ENCODE measurements at regions of chrX and their contacts with region 1.

Region 1: GRCh38 chrX:40013266-40014195 is 84.2 kb downstream of the BCOR start:
- DNase-seq: peak; percentile 41
- H3K4me3 Mint-ChIP-seq: peak overlapping the region; percentile 73
- H3K27ac Mint-ChIP-seq: peak overlapping the region; percentile 87
- H3K4me1 Mint-ChIP-seq: peaks cover 18% of the 10 kb centered on the region
- H3K27me3 Mint-ChIP-seq: peaks cover 11% of the 10 kb centered on the region

Region 2: GRCh38 chrX:39814391-39814790 is 199.1 kb before region 1 on chrX:
- intact Hi-C with region 1: loop called (anchors 5 kb)
- DNase-seq: peak; percentile 19
- H3K4me3 Mint-ChIP-seq: no peak overlapping the region
- H3K27ac Mint-ChIP-seq: no peak overlapping the region
- H3K4me1 Mint-ChIP-seq: peaks cover 33% of the 10 kb centered on the region
- H3K27me3 Mint-ChIP-seq: no peaks in the 10 kb centered on the region

Region 3: DNA sequence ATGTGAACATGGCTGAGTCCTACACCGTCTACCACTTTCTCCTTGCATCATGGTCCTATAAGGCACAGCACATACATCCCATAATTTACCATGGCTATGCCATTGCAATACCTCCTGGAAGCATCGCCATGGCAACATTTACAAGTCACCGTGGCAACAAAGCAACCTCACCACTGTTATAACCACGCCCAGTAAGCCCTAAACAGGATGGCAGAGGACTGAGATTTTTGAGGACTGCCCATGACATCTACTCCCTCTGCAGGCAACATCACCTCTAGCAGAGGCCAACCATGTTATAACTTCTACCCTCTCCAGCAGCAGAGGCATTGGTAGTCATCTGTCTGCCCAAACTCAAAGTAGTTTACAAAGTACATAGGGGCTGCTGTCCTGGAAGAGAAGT is 54.5 kb after region 1 on chrX:
- intact Hi-C with region 1: loop called (anchors 10 kb)
- DNase-seq: peak; percentile 11
- H3K4me3 Mint-ChIP-seq: no peak overlapping the region
- H3K27ac Mint-ChIP-seq: no peak overlapping the region
- H3K4me1 Mint-ChIP-seq: peaks cover 66% of the 10 kb centered on the region
- H3K27me3 Mint-ChIP-seq: no peaks in the 10 kb centered on the region

Region 4: DNA sequence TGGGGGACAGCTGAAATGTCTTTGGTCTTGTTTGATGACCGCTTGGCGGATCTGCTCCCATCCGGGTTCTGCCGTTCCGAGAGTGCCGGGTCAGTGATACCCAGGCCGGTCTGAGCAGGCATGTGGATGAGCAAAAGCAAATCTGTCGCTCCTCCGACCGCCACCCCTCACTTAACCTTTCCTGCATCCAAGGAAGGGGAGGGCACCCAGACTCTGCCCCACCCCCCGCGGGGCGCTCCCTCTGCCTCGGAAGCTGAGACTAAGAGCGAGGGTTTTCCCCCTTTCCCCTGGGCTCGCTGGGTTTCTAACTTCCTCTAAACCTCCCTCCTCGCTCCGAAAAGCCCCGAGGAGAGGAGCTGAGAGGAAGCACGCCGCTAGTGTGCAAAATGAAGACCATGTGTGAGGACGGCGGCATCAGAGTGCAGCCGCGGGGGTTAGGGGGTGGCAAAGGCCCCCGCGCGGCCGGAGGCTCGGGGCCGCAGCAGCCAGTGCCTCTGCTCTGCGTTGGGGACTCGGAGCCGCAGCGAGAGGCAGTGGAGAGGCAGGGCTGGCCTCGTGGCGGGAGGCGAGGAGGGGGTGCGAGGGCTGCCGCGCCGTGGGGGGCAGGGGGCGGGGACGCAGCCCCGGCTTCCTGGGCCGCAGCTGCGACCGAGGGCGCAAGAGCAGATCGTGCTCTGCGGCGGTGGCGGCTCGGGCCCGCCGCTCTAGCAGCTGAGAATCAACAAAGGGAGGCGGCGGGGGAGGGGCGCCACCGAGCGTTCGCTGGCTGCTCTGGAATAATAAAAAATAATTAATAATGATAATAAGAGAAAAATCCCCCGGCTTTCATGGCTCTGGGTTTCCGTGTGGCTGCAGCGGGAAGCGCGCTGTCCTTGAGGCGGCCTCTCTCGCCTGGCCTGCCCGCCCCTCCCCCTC is 140.1 kb after region 1 on chrX:
- intact Hi-C with region 1: loop called (anchors 5 kb)
- DNase-seq: no peak
- H3K4me3 Mint-ChIP-seq: peak overlapping the region; percentile 80
- H3K27ac Mint-ChIP-seq: peak overlapping the region; percentile 69
- H3K4me1 Mint-ChIP-seq: peaks cover 18% of the 10 kb centered on the region
- H3K27me3 Mint-ChIP-seq: no peaks in the 10 kb centered on the region

Region 5: DNA sequence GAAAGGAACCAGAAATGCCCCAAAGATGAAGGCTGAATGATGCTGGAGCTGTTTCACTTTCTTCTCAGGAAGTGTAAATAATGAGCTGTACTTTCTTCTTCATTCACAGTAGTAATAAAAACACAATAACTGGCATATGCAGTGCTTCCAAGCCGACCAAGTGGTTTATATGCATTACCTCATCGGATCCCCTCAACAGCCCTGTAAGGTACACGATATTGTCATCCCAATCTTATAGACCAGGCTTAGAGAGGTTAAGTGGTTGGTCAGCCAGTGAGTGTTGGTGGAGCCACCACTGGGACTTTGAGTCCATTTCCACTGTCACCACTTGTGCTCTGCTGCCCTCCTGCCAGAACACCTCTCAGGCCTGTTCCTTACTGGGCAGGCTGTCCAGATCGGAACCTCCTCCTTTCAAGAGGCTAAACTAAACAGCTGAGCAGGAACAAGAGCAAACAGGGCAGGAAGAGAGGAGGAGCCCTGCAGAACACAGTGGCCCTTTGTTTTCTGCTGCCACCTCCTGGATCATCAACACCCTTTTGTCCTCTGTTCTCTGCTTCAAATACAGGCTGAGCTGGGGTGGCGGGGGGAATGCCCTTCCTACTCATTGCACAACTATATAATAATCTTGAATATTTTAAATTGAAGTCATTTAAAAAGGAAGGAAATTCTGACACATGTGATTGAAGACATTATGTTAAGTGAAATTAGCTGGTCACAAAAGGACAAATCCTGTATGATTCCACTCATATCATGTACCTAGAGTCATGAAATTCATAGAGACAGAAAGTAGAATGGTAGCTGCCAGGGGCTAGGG is 454.7 kb after region 1 on chrX:
- intact Hi-C with region 1: loop called (anchors 10 kb)
- DNase-seq: no peak
- H3K4me3 Mint-ChIP-seq: peak overlapping the region; percentile 30
- H3K27ac Mint-ChIP-seq: peak overlapping the region; percentile 38
- H3K4me1 Mint-ChIP-seq: peaks cover 31% of the 10 kb centered on the region
- H3K27me3 Mint-ChIP-seq: peaks cover 13% of the 10 kb centered on the region